ENCODE measurements at regions of chr1 and their contacts with region 1.

Region 1: DNA sequence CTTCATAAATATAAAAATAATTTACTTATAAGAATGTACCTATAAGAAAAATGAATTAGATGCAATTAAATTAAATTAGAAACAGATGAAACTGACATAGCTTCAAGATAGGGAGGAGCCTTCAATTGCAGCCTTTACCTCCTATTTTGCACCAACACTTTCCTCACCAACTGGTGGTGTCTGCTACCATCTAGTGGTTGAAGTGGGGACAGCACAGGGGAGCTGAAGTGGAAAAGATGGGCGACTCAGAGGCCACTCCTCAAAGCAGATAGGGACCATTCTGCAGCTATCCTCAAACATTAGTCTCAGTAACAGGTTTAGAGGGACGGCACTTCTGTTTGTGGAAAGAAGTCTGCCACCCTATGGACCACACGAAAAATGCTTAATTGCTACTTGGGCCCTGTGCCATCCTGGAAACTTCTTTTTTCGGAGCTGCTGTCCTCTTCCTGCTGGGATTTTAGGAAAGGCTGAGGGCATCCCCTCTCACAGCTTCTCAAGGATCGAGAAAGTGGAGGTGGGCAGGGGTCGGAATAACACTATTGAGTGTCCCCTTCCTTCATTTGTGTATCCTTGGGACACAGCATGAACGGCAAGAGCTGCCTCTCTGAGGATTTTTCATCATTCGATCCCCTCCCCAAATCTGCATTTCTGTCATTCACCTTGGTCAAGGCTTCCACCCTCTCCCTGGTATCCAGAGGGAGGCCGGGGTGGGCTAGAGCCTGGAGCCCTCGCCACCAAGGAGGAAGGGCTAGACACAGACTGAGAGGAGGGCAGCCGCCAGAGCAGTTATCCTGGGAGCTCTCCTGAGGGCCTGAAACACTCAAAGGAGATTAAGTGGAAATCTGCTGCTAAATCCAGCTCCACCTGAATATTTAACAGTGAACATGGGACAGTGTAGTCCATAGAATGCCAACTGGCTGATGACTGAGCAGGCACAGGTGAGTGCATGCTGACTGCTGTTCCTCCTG is 9.6 kb downstream of the PROK1 start:
- DNase-seq: peak in 3 of 4 donors; percentile 63 to 84 (median 73)
- ATAC-seq: peak; percentile 86
- H3K4me3 ChIP-seq: no peak overlapping the region
- H3K27ac ChIP-seq: no peak overlapping the region
- H3K4me1 ChIP-seq: peaks cover 0 to 3% of the 10 kb centered on the region in 2 donors
- H3K27me3 ChIP-seq: no peaks in the 10 kb centered on the region
- CTCF ChIP-seq: peak; percentile 96 to 97

Region 2: GRCh38 chr1:110196917-110197765 is 263.4 kb before region 1 on chr1:
- intact Hi-C with region 1: loop called in 1 of 2 experiments (anchors 5 kb)
- DNase-seq: peak in 1 of 4 donors; percentile 16
- ATAC-seq: peak; percentile 87
- H3K4me3 ChIP-seq: no peak overlapping the region
- H3K27ac ChIP-seq: no peak overlapping the region
- H3K4me1 ChIP-seq: no peaks in the 10 kb centered on the region
- H3K27me3 ChIP-seq: no peaks in the 10 kb centered on the region
- CTCF ChIP-seq: peak; percentile 91

Region 3: GRCh38 chr1:110209715-110210603 is 250.6 kb before region 1 on chr1 and contains the start of gene KCNC4:
- intact Hi-C with region 1: loop called in 1 of 2 experiments (anchors 2 kb)
- DNase-seq: peak; percentile 52 to 97 (median 87)
- ATAC-seq: peak; percentile 92
- H3K4me3 ChIP-seq: peak within 1 kb of the TSS; percentile 65 to 79
- H3K27ac ChIP-seq: peak within 1 kb of the TSS; percentile 73 to 84
- H3K4me1 ChIP-seq: peaks cover 8 to 39% of the 10 kb centered on the region in 2 donors
- H3K27me3 ChIP-seq: peaks cover 12 to 30% of the 10 kb centered on the region in 2 donors
- CTCF ChIP-seq: no peak
- polyA plus RNA-seq, gene KCNC4: 8.5 to 16.3 (median 11.3) TPM

Region 4: GRCh38 chr1:110312188-110313121 is 148.1 kb before region 1 on chr1:
- intact Hi-C with region 1: loop called in 1 of 2 experiments (anchors 10 kb)
- DNase-seq: peak; percentile 64 to 88 (median 80)
- ATAC-seq: peak; percentile 97
- H3K4me3 ChIP-seq: no peak overlapping the region
- H3K27ac ChIP-seq: no peak overlapping the region
- H3K4me1 ChIP-seq: peaks cover 4 to 14% of the 10 kb centered on the region in 2 donors
- H3K27me3 ChIP-seq: no peaks in the 10 kb centered on the region
- CTCF ChIP-seq: peak; percentile 89 to 96

Region 5: GRCh38 chr1:110347182-110347893 is 113.2 kb before region 1 on chr1:
- intact Hi-C with region 1: no loop called
- DNase-seq: no peak
- ATAC-seq: no peak
- H3K4me3 ChIP-seq: no peak overlapping the region
- H3K27ac ChIP-seq: no peak overlapping the region
- H3K4me1 ChIP-seq: peaks cover 18 to 94% of the 10 kb centered on the region in 2 donors
- H3K27me3 ChIP-seq: no peaks in the 10 kb centered on the region
- CTCF ChIP-seq: no peak

Measured in left lung (tissue), 14 donors.